ENCODE measurements at regions of chr19 and their contacts with region 1.

Region 1: DNA sequence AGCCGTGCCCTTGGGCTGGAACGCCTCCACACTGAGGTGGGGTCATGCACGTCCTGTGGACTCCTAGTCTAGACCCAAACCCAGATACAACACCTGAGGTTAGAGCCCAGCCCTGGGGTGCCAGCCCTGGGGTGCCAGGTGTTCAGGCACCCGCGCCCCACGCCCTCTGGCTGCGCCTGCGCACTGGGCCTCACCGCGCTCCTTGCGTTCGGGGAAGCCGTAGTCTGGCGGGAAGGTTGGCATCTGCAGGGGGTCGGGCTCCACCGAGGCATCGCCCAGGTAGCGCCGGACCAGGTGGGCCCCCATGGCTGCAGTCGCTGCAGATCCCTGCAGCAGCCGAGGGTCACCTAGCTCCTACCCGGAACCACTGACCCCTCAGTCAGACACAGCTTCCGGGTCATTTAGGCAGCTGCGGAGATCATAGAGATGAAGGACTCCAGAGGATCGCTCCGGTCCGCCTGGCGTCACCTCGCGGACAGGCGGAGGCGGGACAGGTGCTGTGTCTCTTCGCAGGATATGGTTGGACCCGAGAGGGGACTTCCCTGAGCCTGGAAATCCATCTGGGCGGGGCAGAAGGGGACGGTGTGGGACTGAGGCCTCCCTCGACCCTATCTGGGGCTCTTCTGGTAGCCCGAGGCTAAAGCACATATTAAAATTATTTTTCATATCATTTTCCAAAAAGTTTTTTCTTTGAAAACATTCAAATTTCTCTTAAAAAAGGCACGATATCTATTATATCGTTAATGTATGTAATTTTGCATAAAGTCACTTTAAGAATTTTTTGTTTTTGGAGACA is at the start of gene NDUFB7:
- DNase-seq: peak; percentile 96
- H3K4me3 Mint-ChIP-seq: peak within 1 kb of the TSS; percentile 94
- H3K27ac Mint-ChIP-seq: peak within 1 kb of the TSS; percentile 78
- H3K4me1 Mint-ChIP-seq: peaks cover 11% of the 10 kb centered on the region
- H3K27me3 Mint-ChIP-seq: no peaks in the 10 kb centered on the region
- CTCF ChIP-seq: peak; percentile 60
- total RNA-seq, gene NDUFB7: 153 and 165 TPM in 2 replicates

Region 2: GRCh38 chr19:14318873-14319272 is 253.0 kb before region 1 on chr19:
- CTCF ChIA-PET with region 1: no interaction called
- POLR2A ChIA-PET with region 1: no interaction called
- intact Hi-C with region 1: no loop called
- DNase-seq: no peak
- H3K4me3 Mint-ChIP-seq: no peak overlapping the region
- H3K27ac Mint-ChIP-seq: no peak overlapping the region
- H3K4me1 Mint-ChIP-seq: no peaks in the 10 kb centered on the region
- H3K27me3 Mint-ChIP-seq: peaks cover 8% of the 10 kb centered on the region
- CTCF ChIP-seq: no peak

Region 3: GRCh38 chr19:14556662-14557188 is 15.2 kb before region 1 on chr19:
- CTCF ChIA-PET with region 1: interaction called, 21 read pairs
- POLR2A ChIA-PET with region 1: interaction called, 18 read pairs
- intact Hi-C with region 1: no loop called
- DNase-seq: peak; percentile 81
- H3K4me3 Mint-ChIP-seq: peak overlapping the region; percentile 45
- H3K27ac Mint-ChIP-seq: peak overlapping the region; percentile 88
- H3K4me1 Mint-ChIP-seq: peaks cover 34% of the 10 kb centered on the region
- H3K27me3 Mint-ChIP-seq: no peaks in the 10 kb centered on the region
- CTCF ChIP-seq: peak; percentile 93

Region 4: DNA sequence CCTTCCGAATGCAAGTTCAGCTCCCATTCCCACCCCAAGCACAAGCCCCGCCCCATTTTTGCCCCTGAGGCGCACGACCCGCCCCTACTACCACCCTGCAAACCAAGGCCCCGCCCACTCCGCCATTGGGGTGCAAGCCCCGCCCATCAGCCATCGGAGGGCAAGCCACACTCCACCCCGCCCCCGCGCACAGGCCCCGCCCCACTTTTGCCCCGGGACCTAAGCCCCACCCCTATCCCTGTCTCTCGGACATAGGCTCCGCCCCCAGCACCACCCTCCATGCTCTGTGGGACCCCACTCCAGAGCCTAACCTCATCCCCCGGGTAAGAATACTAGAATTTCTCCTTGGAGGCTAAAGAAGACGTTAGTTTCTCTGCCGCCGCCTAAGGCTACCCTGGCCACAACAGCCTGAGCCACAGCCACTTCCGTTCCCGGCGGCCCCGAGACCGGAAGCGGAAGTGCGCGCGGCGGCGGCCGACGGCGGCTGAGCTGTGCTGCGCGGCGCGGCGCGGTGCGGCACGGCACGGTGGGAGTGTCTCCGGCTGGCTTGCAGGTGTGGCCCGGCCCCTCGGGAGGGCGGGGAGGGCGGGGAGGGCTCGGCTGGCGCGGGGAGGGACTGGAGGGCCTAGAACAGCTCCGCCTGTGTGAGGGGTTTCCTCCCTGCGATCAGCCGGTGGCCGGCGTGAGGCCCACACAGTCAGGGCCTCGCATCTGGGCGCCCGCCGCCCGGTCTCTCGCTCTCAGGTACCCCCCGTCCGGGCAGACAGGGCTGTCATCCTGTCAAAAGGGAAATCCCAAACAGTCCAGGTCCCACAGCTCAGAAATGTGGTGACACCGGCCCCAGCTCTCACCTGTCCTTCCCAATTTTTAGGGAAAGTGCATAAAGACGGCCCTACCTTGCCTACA is 118.0 kb after region 1 on chr19 and contains the start of gene ZNF333:
- CTCF ChIA-PET with region 1: interaction called, 146 read pairs
- POLR2A ChIA-PET with region 1: interaction called, 41 read pairs
- intact Hi-C with region 1: loop called (anchors 1 kb)
- DNase-seq: peak; percentile 89
- H3K4me3 Mint-ChIP-seq: peak within 1 kb of the TSS; percentile 94
- H3K27ac Mint-ChIP-seq: peak within 1 kb of the TSS; percentile 99
- H3K4me1 Mint-ChIP-seq: no peaks in the 10 kb centered on the region
- H3K27me3 Mint-ChIP-seq: no peaks in the 10 kb centered on the region
- CTCF ChIP-seq: no peak
- total RNA-seq, gene ZNF333: 15.4 and 17.5 TPM in 2 replicates

Region 5: GRCh38 chr19:14786421-14786851 is 214.5 kb after region 1 on chr19:
- CTCF ChIA-PET with region 1: interaction called, 6 read pairs
- POLR2A ChIA-PET with region 1: no interaction called
- intact Hi-C with region 1: loop called (anchors 2 kb)
- DNase-seq: peak; percentile 43
- H3K4me3 Mint-ChIP-seq: no peak overlapping the region
- H3K27ac Mint-ChIP-seq: no peak overlapping the region
- H3K4me1 Mint-ChIP-seq: peaks cover 12% of the 10 kb centered on the region
- H3K27me3 Mint-ChIP-seq: no peaks in the 10 kb centered on the region
- CTCF ChIP-seq: peak; percentile 92

Region 6: GRCh38 chr19:14890643-14891379 is 318.9 kb after region 1 on chr19:
- CTCF ChIA-PET with region 1: interaction called, 63 read pairs
- POLR2A ChIA-PET with region 1: interaction called, 3 read pairs
- intact Hi-C with region 1: loop called (anchors 1 kb)
- DNase-seq: no peak
- H3K4me3 Mint-ChIP-seq: no peak overlapping the region
- H3K27ac Mint-ChIP-seq: no peak overlapping the region
- H3K4me1 Mint-ChIP-seq: peaks cover 8% of the 10 kb centered on the region
- H3K27me3 Mint-ChIP-seq: peaks cover 34% of the 10 kb centered on the region
- CTCF ChIP-seq: no peak